Posterior cingulate gyrus (tissue), 11 donors: ENCODE measurements at regions of chr2 and their contacts with region 1.

Region 1: DNA sequence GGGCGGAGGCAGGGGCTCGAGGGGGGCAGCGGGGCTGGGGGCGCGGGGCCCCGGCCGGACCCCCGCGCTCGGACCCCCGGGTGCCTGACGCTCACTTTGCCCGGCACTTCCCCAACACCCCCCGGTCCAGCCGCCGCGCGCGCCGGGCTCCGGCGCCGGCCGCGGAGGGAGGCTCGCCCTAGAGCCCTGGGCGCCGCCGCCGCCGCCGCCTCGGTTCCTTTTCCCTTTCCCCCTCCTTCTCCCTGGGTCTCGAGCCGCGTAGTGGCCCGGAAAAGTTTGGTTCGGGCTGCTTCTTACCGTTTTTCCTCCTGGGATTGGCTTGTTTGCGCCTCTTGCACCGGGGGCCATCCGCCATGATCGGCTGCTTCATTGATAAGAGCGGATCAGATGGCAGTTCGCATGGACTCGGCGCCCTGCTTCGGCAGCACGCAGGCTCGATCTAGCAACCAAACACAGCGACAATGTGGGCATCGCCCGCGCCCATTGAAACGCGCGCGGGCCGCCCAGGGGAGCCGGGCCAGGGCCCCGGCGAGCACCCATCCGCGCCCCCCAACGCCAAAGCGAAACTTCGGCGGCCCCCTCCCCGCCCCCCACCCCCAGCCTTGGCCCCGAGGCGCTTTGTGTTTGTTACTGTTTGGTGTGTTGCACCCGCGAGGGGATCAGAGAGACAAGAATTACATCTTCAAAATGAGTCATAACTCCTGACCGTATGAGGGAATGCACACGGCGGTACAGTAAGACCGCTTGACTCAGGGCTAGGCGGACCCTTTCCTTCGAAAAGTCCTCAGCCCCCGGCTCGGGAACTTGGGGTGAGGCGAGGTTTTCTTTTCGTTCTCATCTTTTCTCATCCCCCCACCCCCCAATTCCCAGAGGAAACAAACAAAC is 2.7 kb downstream of the ZEB2 start:
- DNase-seq: peak in 6 of 10 donors; percentile 53 to 93 (median 76)

Region 2: GRCh38 chr2:143162123-143162837 is 1354.9 kb before region 1 on chr2:
- intact Hi-C with region 1: no loop called
- DNase-seq: peak in 9 of 10 donors; percentile 13 to 92 (median 49)

Region 3: DNA sequence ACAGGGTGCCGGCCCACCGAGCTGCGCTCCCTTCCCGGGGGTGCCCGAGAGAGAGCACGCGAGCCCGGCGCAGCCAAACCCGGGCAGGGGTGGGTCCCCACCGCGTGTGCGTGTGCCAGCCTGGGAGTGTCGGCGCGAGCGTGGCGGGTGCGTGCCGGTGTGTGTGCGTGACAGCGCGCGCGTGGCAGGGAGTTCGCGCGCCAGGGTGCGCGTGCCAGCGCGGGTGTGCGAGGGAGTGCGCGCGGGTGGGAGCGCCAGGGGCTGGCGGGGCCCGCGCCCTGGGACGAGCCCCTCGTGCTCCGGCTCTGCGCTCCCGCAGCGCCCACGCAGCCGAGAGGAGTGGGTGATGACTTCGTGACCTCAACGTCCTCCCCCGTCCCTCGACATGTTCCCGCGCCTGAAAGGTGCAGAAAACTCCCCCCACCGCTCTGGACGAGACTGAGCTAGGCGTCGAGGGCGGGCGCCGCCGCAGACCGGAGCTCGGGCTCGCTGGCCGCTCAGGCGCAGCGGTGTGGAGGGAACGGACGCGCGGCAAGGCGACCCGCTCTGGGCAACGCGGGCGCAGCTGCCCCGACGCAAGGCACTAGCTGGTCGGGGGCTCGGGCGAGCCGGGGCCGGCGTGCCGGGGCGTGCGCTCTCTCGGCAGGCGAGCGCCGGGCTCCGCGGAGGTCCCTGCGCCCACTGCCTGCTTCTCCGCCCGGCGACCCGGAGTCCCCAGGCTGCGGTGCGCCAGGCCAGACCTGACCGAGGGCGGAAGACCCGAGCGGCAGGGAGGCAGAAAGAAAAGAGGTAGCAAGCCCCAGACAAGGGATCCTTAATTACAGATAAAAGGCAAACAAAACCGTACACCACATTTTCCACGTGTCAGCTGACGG is 580.1 kb before region 1 on chr2:
- intact Hi-C with region 1: loop called (anchors 10 kb)
- DNase-seq: peak; percentile 23 to 94 (median 64)

Region 4: GRCh38 chr2:144230448-144231085 is 286.7 kb before region 1 on chr2:
- intact Hi-C with region 1: loop called (anchors 10 kb)
- DNase-seq: no peak

Region 5: GRCh38 chr2:144426981-144427479 is 90.2 kb before region 1 on chr2:
- intact Hi-C with region 1: loop called (anchors 5 kb)
- DNase-seq: peak in 1 of 10 donors; percentile 62

Region 6: GRCh38 chr2:144471305-144472045 is 45.7 kb before region 1 on chr2:
- intact Hi-C with region 1: no loop called
- DNase-seq: no peak

Region 7: GRCh38 chr2:144567745-144568144 is 50.5 kb after region 1 on chr2:
- intact Hi-C with region 1: no loop called
- DNase-seq: no peak

Region 8: DNA sequence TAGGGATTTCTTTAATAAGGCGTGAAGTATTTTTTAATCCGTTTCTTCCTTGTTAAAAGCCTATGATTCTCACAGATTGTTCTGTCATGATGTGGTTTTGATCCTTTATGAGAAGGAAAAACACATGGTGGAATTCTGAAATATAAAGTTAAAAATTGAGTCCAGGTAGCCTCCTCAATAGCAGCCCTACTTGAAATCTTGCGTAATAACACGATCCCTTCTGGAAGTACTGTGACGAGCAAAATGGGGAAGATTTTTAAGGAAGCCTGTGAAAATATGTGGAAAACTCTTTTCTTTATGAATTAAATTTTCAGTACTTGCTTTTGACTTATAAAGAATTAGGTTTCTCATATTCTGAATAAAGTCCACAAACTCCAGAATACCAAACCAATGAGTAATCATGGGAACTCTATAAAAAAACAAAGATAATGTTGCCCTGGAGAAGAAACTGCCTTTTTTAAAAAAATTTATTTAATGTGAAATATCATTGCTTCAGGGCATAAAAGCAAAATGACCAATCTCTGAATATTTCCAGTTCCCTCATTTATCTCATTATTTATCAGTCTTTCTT is 479.1 kb after region 1 on chr2:
- intact Hi-C with region 1: loop called (anchors 10 kb)
- DNase-seq: no peak

Region 9: DNA sequence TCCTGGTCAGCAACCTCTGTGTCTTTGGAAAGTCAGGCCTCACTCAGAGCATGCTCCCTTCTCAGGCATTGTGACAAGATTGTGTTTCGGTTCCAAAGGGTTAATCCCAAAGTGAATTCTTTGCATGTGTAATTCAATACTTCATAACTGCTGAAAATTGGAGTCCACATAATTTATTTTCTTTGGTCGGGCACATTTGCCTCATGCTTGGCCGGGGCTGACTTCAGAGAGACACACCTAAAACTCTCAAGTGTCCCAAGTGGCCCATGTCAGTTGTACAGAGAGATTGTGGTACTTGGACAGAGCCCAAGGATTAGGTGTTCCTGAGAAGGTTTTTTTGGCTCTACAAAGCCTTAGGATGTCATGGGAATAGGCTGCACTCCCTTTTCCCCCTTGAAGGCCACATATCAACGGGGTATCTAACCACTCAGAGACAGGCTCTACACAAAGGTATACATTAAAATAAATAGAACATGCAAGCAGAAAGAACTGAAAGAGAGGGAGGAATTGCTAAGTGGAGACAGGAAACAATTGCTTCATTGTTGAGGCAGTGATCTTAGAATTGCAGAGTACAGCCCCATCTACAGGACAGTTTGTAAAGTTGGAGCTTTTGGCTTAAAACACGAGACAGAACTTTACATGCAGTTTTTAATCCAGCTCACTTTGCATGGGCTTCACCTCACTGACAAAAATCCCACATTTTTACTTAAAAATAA is 1235.0 kb after region 1 on chr2:
- intact Hi-C with region 1: loop called (anchors 5 kb)
- DNase-seq: peak in 2 of 10 donors; percentile 9 to 30